ENCODE measurements at regions of chr15 and their contacts with region 1.

Region 1: DNA sequence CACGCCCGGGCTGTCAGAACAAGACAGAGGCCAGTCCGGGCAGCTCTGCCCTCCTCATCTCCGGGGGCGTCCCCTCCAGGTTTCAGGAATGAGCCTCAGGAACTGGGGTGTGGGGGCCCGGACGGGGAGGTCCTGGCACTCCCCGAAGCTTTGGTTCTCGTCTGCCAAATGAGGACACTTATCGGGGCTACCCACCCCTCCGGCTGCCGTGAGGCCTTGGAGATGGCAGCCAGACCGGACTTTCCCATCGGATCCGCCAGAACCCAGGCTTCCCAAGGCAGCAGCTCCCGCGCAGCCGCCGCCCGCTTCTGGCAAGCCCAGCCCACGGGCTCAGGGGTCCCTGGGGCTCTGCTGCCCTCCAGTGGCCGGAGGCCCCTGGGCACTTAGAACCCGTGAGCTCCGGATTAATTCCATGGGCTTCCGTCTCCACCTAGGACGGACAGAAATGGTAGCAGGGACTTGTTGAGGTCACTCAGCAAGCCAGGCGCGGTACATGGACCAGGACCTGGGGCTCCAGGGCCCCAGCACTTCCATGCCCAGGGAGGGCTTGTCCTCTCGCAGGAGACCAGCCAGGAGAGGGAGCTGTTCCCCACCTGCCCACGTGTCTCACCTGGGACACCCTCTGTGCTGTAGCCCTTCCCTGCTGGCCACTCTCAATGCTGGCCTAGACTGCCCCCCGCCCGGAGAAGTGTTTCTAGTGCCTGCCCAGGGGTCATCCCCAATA is 89.4 kb downstream of the LINGO1 start:
- DNase-seq: peak; percentile 88
- H3K4me3 ChIP-seq: peak overlapping the region; percentile 70
- H3K27ac ChIP-seq: no peak overlapping the region
- H3K4me1 ChIP-seq: peaks cover 36% of the 10 kb centered on the region
- CTCF ChIP-seq: peak; percentile 100

Region 2: DNA sequence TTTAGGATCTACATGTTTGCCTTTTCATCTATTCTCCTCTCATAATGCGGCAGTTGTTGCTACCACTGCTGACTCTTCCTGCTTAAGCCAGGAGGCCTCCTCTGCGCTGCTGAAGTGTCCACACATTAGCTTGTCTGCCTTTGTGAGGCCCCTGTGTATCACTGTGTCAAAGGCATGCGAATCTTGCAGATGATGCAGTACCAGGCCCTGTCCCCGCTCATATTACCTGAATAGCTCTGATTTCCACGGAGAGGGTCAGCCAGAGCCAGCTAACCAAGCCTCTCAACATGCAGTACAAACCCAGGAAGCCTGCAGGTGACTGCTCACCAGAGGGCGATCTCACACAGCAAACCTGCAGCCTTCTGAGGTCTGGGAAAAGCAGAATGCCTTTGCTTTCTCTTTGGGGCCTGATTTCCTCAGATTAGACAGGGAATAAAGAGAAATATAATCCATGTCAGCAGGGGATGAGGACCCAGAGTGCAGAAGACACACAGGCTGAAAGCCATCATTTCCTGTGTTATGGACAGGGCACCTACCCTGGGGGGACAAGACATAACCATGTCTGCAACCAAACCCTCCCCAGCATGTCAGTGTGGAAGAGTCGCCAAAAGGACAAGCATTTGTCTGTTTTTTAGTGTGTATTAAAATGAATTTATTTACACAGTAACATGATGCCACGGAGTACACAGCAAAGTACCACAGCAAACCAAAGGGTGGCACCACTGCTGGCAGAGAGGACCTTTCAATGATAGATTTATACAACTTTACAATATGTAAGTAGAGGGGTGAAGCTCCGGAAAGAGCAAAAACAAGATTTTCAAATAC is 435.6 kb before region 1 on chr15:
- CTCF ChIA-PET with region 1: interaction called, 4 read pairs
- POLR2A ChIA-PET with region 1: no interaction called
- intact Hi-C with region 1: loop called (anchors 2 kb)
- DNase-seq: peak; percentile 57
- H3K4me3 ChIP-seq: no peak overlapping the region
- H3K27ac ChIP-seq: no peak overlapping the region
- H3K4me1 ChIP-seq: no peaks in the 10 kb centered on the region
- CTCF ChIP-seq: peak; percentile 86

Region 3: GRCh38 chr15:77118882-77119321 is 424.4 kb before region 1 on chr15:
- CTCF ChIA-PET with region 1: interaction called, 12 read pairs
- POLR2A ChIA-PET with region 1: no interaction called
- intact Hi-C with region 1: loop called (anchors 1 kb)
- DNase-seq: peak; percentile 67
- H3K4me3 ChIP-seq: no peak overlapping the region
- H3K27ac ChIP-seq: no peak overlapping the region
- H3K4me1 ChIP-seq: no peaks in the 10 kb centered on the region
- CTCF ChIP-seq: peak; percentile 94

Region 4: GRCh38 chr15:77186594-77187011 is 356.7 kb before region 1 on chr15:
- CTCF ChIA-PET with region 1: interaction called, 13 read pairs
- POLR2A ChIA-PET with region 1: no interaction called
- intact Hi-C with region 1: loop called (anchors 1 kb)
- DNase-seq: peak; percentile 48
- H3K4me3 ChIP-seq: no peak overlapping the region
- H3K27ac ChIP-seq: no peak overlapping the region
- H3K4me1 ChIP-seq: peaks cover 49% of the 10 kb centered on the region
- CTCF ChIP-seq: peak; percentile 81

Region 5: DNA sequence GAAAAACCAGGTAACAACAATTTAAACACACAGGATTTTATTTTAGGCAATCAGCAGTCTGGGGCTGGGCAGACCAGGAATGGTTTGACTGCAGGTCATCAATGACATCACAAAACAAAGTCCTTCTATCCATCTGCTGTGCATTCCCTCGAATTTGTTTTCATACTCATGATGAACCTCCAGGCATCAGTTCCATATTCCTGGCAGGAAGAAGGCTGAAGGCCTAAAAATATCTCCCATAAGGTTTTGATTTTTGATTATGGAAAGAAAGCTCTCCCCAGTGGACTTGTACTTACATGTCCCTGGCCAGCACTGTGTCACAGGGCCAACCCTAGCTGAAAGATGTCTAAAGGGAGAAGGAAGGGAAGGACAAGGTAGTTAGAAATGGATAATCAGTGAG is 230.8 kb before region 1 on chr15:
- CTCF ChIA-PET with region 1: no interaction called
- POLR2A ChIA-PET with region 1: no interaction called
- intact Hi-C with region 1: loop called (anchors 10 kb)
- DNase-seq: no peak
- H3K4me3 ChIP-seq: no peak overlapping the region
- H3K27ac ChIP-seq: no peak overlapping the region
- H3K4me1 ChIP-seq: no peaks in the 10 kb centered on the region
- CTCF ChIP-seq: no peak

Region 6: GRCh38 chr15:77419836-77420609 is 123.3 kb before region 1 on chr15 and contains the start of gene PEAK1:
- CTCF ChIA-PET with region 1: interaction called, 4 read pairs
- POLR2A ChIA-PET with region 1: no interaction called
- intact Hi-C with region 1: loop called (anchors 2 kb)
- DNase-seq: peak; percentile 98
- H3K4me3 ChIP-seq: peak within 1 kb of the TSS; percentile 88
- H3K27ac ChIP-seq: peak within 1 kb of the TSS; percentile 80
- H3K4me1 ChIP-seq: peaks cover 22% of the 10 kb centered on the region
- CTCF ChIP-seq: no peak
- total RNA-seq, gene PEAK1: 6.0 and 8.9 TPM in 2 replicates

Region 7: DNA sequence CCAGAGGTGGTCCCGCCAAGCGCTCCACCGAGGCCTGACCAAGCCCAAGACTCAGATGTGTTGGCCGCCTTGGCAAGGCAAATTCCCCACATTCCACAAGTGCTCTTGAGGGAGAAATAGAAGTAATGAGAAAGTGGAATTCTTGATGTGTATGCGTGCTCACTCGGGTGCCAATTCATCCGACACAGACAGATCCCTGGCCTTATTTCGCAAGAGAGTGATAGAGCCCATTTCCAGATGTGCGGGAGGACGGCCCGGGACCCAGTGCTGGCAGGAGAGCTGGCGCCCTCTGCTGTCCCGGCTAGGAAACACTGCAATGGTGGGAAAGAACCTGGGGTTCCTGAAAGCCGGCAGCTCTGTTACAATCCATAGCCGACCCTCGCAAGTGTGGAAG is 46.6 kb before region 1 on chr15:
- CTCF ChIA-PET with region 1: interaction called, 20 read pairs
- POLR2A ChIA-PET with region 1: interaction called, 6 read pairs
- intact Hi-C with region 1: loop called (anchors 1 kb)
- DNase-seq: peak; percentile 65
- H3K4me3 ChIP-seq: no peak overlapping the region
- H3K27ac ChIP-seq: no peak overlapping the region
- H3K4me1 ChIP-seq: peaks cover 22% of the 10 kb centered on the region
- CTCF ChIP-seq: peak; percentile 95

Region 8: DNA sequence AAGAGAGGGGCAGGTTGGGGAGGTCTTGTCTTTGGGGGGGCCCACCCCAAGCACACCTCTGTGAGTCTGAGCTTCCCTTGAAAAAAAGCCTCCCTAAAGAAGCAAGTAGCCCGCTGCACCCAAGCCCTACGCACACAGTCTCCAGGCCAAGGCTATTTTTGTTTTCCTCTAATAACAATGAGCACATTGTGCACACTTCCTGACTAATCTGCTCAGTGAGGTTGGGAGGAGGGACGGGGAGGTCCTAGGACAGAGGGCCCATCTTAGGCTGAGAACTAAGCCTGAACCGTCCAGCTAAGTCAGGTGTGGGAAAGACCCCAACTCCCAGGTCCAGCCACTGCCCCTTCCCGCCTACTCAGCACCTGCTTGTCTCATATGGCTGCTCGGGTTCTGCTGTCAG is 35.4 kb before region 1 on chr15:
- CTCF ChIA-PET with region 1: no interaction called
- POLR2A ChIA-PET with region 1: no interaction called
- intact Hi-C with region 1: no loop called
- DNase-seq: no peak
- H3K4me3 ChIP-seq: no peak overlapping the region
- H3K27ac ChIP-seq: no peak overlapping the region
- H3K4me1 ChIP-seq: peaks cover 24% of the 10 kb centered on the region
- CTCF ChIP-seq: no peak

Measured in OCI-LY7 (cell line).